Stomach (tissue), 19 donors: ENCODE measurements at regions of chr7 and their contacts with region 1.

Region 1: DNA sequence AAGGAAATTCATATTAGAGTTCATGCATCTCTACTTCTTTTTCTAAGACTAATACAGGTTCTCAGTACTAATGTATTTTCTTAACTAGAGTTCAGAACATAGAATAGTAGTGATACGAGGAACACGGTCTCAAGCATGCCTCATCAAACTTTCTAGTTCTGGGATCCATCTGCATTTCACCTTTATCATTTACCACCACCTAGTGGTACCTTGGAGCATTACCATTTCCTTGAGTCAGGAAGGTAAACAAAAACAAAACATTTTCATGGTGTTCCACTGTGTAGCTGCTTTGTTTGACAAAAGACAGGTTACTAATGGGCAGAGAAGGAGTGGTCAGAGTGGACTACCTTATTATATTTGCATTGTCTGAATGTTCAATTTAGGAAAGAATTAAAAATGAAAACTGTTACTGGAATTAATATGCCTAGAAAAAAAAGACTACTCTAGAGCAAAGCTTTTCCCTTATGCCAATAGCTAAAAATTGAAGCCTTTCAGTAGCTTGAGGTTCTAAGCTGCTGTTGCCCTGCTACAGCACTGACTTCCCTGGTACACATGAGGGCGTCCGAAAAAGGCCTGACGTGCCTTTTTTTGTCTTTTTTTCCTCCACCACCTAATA is 44.5 kb downstream of the STARD3NL start:
- DNase-seq: peak in 1 of 2 donors; percentile 85
- H3K4me3 ChIP-seq: no peak overlapping the region
- H3K27ac ChIP-seq: peak overlapping the region in 2 of 5 donors; percentile 14 to 65
- H3K4me1 ChIP-seq: peaks cover 0 to 11% (median 4%) of the 10 kb centered on the region in 4 donors
- H3K27me3 ChIP-seq: no peaks in the 10 kb centered on the region
- CTCF ChIP-seq: peak in 5 of 7 experiments; percentile 86 to 96 (median 92)
- EP300 ChIP-seq: no peak
- POLR2A ChIP-seq: no peak

Region 2: GRCh38 chr7:37040330-37040729 is 1182.3 kb before region 1 on chr7:
- intact Hi-C with region 1: no loop called
- DNase-seq: no peak
- H3K4me3 ChIP-seq: no peak overlapping the region
- H3K27ac ChIP-seq: no peak overlapping the region
- H3K4me1 ChIP-seq: no peaks in the 10 kb centered on the region
- H3K27me3 ChIP-seq: no peaks in the 10 kb centered on the region
- CTCF ChIP-seq: no peak
- EP300 ChIP-seq: no peak
- POLR2A ChIP-seq: no peak

Region 3: GRCh38 chr7:37901236-37901827 is 321.3 kb before region 1 on chr7:
- intact Hi-C with region 1: loop called (anchors 10 kb)
- DNase-seq: peak in 1 of 2 donors; percentile 67
- H3K4me3 ChIP-seq: no peak overlapping the region
- H3K27ac ChIP-seq: no peak overlapping the region
- H3K4me1 ChIP-seq: peaks cover 0 to 4% (median 2%) of the 10 kb centered on the region in 4 donors
- H3K27me3 ChIP-seq: no peaks in the 10 kb centered on the region
- CTCF ChIP-seq: peak in 4 of 7 experiments; percentile 14 to 33 (median 24)
- EP300 ChIP-seq: no peak
- POLR2A ChIP-seq: no peak

Region 4: DNA sequence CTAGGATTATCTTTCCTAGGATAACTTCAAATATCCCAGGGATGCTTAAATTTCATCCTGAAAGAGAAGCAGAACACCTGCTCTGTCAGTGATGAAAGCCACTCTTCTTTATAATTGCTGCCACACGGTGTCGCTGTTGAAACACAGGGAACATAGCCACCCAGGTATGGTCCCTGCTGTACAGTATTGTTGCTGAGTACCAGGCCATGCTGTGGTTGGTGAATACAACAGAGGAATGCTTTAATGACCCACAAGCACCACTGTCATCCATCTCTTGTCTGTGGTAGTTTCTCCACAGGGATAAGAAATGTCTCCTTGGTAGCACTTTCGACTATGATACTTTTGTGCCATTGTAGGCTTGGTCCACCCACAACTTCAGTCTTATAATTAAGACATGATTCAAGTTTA is 115.1 kb before region 1 on chr7:
- intact Hi-C with region 1: loop called (anchors 5 kb)
- DNase-seq: peak; percentile 69 to 84
- H3K4me3 ChIP-seq: no peak overlapping the region
- H3K27ac ChIP-seq: no peak overlapping the region
- H3K4me1 ChIP-seq: no peaks in the 10 kb centered on the region
- H3K27me3 ChIP-seq: no peaks in the 10 kb centered on the region
- CTCF ChIP-seq: peak in 5 of 7 experiments; percentile 58 to 75 (median 71)
- EP300 ChIP-seq: no peak
- POLR2A ChIP-seq: no peak

Region 5: DNA sequence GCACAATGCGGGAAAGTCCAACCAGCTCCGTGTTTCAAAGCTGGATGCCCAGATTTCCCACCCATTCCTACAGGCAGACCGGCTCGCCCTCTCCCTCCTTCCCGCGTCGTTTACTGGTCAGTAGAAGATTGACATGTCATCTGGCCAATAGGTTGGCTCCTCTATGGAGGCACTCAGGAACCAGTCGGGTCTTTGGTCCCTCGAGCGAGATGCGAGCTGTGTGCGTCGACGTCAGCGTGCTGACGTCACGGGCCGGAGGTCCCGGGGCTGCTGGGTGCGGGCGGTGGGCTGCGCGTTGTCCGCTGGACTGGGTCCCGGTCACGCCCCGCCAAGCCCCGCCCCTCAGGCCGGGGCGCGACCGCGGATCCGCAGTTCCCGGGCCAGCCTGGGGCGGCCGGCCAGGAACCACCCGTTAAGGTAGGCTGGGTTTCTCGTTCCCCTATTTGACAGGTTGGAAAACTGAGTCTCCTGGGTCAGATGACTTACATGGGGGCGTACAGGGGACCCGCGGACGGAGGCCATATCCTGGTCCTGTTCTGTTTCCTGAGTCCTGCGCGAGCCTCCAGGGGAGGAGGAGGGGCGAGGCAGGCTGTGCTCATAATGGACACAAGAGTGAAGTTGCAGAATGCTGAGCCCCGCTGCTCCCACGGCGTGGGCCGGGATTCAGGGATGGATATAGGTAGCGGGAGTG is 44.4 kb before region 1 on chr7 and contains the start of gene STARD3NL:
- intact Hi-C with region 1: no loop called
- DNase-seq: peak; percentile 95 to 100
- H3K4me3 ChIP-seq: peak within 1 kb of the TSS; percentile 62 to 81 (median 73)
- H3K27ac ChIP-seq: peak within 1 kb of the TSS; percentile 88 to 94 (median 93)
- H3K4me1 ChIP-seq: peaks cover 14 to 27% (median 18%) of the 10 kb centered on the region in 4 donors
- H3K27me3 ChIP-seq: no peaks in the 10 kb centered on the region
- CTCF ChIP-seq: peak in 1 of 7 experiments; percentile 19
- EP300 ChIP-seq: no peak
- POLR2A ChIP-seq: no peak
- total RNA-seq, gene STARD3NL: 9.3 to 61.6 (median 27.2) TPM